Activated CD4-positive, alpha-beta T cell treated with anti-CD3 and anti-CD28 coated beads for 36 hours (primary cell): ENCODE measurements at regions of chr16 and their contacts with region 1.

Region 1: GRCh38 chr16:21599233-21600030 is at the start of gene METTL9:
- DNase-seq: peak; percentile 97
- ATAC-seq: peak; percentile 95
- H3K4me3 Mint-ChIP-seq: peak within 1 kb of the TSS; percentile 90
- H3K27ac Mint-ChIP-seq: peak within 1 kb of the TSS; percentile 96
- H3K4me1 Mint-ChIP-seq: peaks cover 54% of the 10 kb centered on the region
- H3K27me3 Mint-ChIP-seq: no peaks in the 10 kb centered on the region
- total RNA-seq, gene METTL9: 78.3 to 98.0 TPM

Region 2: DNA sequence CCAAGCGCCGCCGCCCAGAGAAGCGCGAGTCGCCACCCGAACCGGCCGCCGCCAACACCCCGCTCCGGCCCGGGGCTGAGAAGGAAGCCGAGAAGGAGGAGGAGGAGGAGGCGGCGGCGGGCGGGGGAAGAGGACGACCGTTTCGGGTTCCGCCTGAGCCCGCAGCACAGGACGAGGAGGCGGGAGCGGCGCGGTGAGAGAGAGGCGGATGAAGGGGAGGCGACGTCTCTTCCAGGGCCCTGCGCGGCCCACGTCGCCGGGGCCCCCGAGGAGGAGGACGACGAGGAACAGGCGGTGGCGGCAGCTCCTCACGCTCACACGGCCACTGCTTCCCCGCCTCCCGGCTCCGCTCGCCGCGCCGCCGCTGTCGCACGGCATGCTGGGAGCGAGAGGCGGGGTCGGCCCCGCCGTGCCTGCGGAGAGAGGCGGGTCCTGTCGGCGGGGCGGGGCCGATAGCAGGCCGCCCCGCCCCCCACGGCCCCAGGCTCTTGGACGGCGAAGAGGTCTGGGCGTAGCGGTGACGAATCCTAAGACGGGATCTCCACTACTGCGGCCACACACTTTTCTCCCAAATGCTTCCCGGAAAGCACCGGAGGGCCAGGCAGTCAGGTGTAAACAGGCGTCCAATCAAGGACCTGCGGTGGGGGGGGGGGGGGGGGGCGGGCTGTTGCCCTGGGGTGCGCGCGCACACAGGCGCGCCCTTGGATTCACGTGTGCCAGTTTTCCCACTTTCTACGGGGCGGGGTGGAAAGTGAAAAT is 97.3 kb before region 1 on chr16:
- CTCF ChIA-PET with region 1: no interaction called
- POLR2A ChIA-PET with region 1: no interaction called
- intact Hi-C with region 1: loop called in 1 of 2 experiments (anchors 10 kb)
- DNase-seq: peak; percentile 97
- ATAC-seq: peak; percentile 75
- H3K4me3 Mint-ChIP-seq: peak overlapping the region; percentile 83
- H3K27ac Mint-ChIP-seq: peak overlapping the region; percentile 93
- H3K4me1 Mint-ChIP-seq: peaks cover 24% of the 10 kb centered on the region
- H3K27me3 Mint-ChIP-seq: no peaks in the 10 kb centered on the region

Region 3: GRCh38 chr16:21638573-21638975 is 39.1 kb after region 1 on chr16:
- CTCF ChIA-PET with region 1: interaction called, 5 read pairs
- POLR2A ChIA-PET with region 1: no interaction called
- intact Hi-C with region 1: loop called in 1 of 2 experiments (anchors 1 kb)
- DNase-seq: peak; percentile 57
- ATAC-seq: peak; percentile 92
- H3K4me3 Mint-ChIP-seq: no peak overlapping the region
- H3K27ac Mint-ChIP-seq: peak overlapping the region; percentile 74
- H3K4me1 Mint-ChIP-seq: peaks cover 31% of the 10 kb centered on the region
- H3K27me3 Mint-ChIP-seq: no peaks in the 10 kb centered on the region

Region 4: DNA sequence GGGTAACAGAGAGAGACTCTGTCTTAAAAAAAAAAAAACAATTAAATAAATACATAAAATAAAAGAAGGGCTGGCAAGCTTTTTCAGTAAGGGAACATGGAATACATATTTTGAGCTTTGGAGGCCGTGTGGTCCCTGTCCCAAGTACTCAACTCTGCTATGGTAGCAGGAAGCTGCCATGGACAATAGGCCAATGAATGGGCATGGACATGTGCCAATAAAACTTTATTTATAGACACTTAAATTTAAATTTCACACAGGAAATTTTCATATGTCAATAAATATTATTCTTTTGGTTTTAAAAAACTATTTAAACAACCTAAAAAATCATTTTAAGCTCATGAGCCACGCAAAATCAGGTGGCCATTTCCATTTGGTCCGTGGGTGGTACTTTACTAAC is 68.1 kb after region 1 on chr16:
- CTCF ChIA-PET with region 1: no interaction called
- POLR2A ChIA-PET with region 1: no interaction called
- intact Hi-C with region 1: no loop called
- DNase-seq: no peak
- ATAC-seq: no peak
- H3K4me3 Mint-ChIP-seq: no peak overlapping the region
- H3K27ac Mint-ChIP-seq: no peak overlapping the region
- H3K4me1 Mint-ChIP-seq: peaks cover 4% of the 10 kb centered on the region
- H3K27me3 Mint-ChIP-seq: peaks cover 3% of the 10 kb centered on the region

Region 5: GRCh38 chr16:21952793-21953540 is 353.5 kb after region 1 on chr16 and contains the start of gene UQCRC2:
- CTCF ChIA-PET with region 1: interaction called, 3 read pairs
- POLR2A ChIA-PET with region 1: no interaction called
- intact Hi-C with region 1: loop called in 1 of 2 experiments (anchors 1 kb)
- DNase-seq: peak; percentile 92
- ATAC-seq: peak; percentile 93
- H3K4me3 Mint-ChIP-seq: peak within 1 kb of the TSS; percentile 98
- H3K27ac Mint-ChIP-seq: peak within 1 kb of the TSS; percentile 100
- H3K4me1 Mint-ChIP-seq: peaks cover 58% of the 10 kb centered on the region
- H3K27me3 Mint-ChIP-seq: no peaks in the 10 kb centered on the region
- total RNA-seq, gene UQCRC2: 321 to 367 TPM

Region 6: DNA sequence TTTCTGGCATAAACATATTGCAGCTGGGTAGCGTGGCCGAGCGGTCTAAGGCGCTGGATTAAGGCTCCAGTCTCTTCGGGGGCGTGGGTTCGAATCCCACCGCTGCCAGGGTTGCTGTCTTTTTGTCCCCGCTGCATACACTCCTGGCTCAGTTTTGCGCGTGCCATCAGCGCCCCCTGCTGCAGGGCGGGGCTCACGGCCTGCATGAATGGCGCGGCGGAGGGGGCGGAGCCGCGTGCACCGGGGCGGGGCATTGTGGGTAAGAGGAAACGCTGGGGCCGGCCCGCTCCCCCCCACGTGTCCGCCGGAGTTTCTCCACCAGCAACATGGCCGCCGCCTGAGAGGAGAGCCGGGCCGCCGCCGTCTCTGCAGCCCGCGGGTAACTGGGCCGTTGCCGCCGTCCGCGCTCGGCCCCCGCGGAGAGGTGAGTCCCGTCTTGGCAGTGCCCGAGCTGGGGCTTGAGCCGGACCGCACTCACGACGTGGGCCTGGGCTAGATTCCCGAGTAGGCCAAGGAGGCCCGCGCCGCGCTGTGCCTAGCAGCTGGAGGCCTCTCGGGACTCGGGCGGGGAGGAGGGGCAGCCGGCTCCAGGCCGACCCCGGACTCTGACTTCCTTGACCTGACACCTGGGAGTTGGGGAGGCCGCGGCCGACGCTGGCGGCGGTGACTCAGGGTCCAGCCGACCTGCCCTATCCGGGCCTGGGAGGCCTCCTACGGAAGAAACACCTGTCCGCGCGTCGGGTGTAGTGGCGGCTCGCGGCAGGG is 697.9 kb after region 1 on chr16 and contains the start of gene POLR3E:
- CTCF ChIA-PET with region 1: no interaction called
- POLR2A ChIA-PET with region 1: no interaction called
- intact Hi-C with region 1: no loop called
- DNase-seq: peak; percentile 100
- ATAC-seq: peak; percentile 87
- H3K4me3 Mint-ChIP-seq: peak within 1 kb of the TSS; percentile 93
- H3K27ac Mint-ChIP-seq: peak within 1 kb of the TSS; percentile 96
- H3K4me1 Mint-ChIP-seq: peaks cover 38% of the 10 kb centered on the region
- H3K27me3 Mint-ChIP-seq: no peaks in the 10 kb centered on the region
- total RNA-seq, gene POLR3E: 70.9 to 87.4 TPM

Region 7: DNA sequence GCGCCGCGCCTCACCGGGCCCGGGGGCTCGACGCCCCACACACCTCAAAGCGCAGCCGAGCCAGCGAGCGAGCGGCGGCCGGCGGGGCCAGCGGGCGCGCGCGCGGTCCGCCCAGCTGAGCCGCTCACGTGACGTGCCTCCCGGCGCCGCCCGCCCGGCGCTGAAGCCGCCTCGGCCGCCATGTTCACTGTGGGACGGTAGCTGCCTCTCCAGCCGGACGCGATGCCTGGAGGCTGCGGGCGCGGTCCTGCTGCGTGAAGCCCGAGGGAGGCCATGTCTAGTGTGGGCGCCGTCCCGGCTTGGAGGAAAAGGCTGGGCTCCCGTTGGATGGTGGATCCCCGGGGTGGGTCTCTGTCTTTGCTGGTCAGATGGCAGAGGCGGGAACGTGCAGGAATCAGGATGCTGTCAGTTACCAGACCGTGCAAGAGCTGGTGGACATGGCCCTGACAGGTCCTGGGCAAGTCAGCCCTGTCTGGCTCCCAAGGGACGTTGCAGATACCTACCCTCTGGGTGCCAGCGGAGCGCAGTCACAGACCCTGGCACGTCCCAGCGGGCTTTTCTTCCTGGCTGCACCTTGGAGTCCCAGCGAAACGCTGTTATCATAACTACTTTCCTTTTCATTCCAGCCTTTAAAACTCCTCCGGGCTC is 1550.0 kb after region 1 on chr16 and contains the start of gene USP31:
- CTCF ChIA-PET with region 1: no interaction called
- POLR2A ChIA-PET with region 1: no interaction called
- intact Hi-C with region 1: loop called in 1 of 2 experiments (anchors 1 kb)
- DNase-seq: peak; percentile 94
- ATAC-seq: peak; percentile 99
- H3K4me3 Mint-ChIP-seq: peak within 1 kb of the TSS; percentile 86
- H3K27ac Mint-ChIP-seq: peak within 1 kb of the TSS; percentile 86
- H3K4me1 Mint-ChIP-seq: peaks cover 28% of the 10 kb centered on the region
- H3K27me3 Mint-ChIP-seq: no peaks in the 10 kb centered on the region
- total RNA-seq, gene USP31: 5.3 to 5.9 TPM